H1 (cell line): ENCODE measurements at regions of chr2 and their contacts with region 1.

Region 1: GRCh38 chr2:215454519-215455246 is 18.8 kb upstream of the FN1 start:
- DNase-seq: no peak
- H3K4me3 ChIP-seq: no peak overlapping the region
- H3K27ac ChIP-seq: no peak overlapping the region
- H3K4me1 ChIP-seq: no peaks in the 10 kb centered on the region
- H3K27me3 ChIP-seq: no peaks in the 10 kb centered on the region
- CTCF ChIP-seq: peak in 2 of 3 experiments; percentile 42 to 68; a peak in 2 of 4 replicates
- EP300 ChIP-seq: no peak
- POLR2A ChIP-seq: no peak
- RAD21 ChIP-seq: peak; percentile 71

Region 2: GRCh38 chr2:215435809-215436704 is 18.6 kb before region 1 on chr2 and contains the start of gene FN1:
- CTCF ChIA-PET with region 1: interaction called, 10 read pairs
- POLR2A ChIA-PET with region 1: interaction called, 5 read pairs
- DNase-seq: peak; percentile 68 to 91
- H3K4me3 ChIP-seq: peak within 1 kb of the TSS; percentile 80 to 99 (median 84)
- H3K27ac ChIP-seq: peak within 1 kb of the TSS; percentile 85
- H3K4me1 ChIP-seq: no peaks in the 10 kb centered on the region; a peak in 1 of 7 replicates
- H3K27me3 ChIP-seq: no peaks in the 10 kb centered on the region; a peak in 2 of 7 replicates
- CTCF ChIP-seq: no peak
- EP300 ChIP-seq: 0 out of 3 replicates have a peak, but pooled peaks of 1 of the 2 experiments have one; percentile 4
- POLR2A ChIP-seq: peak in 1 of 2 experiments; percentile 63; a peak in 2 of 3 replicates
- RAD21 ChIP-seq: no peak; a peak in 1 of 4 replicates
- total RNA-seq, gene FN1: 109 and 116 TPM in 2 replicates